Gastrocnemius medialis (tissue), 4 donors: ENCODE measurements at regions of chr17 and their contacts with region 1.

Region 1: GRCh38 chr17:3004133-3004801 is 59.1 kb downstream of the OR1D5 start:
- DNase-seq: peak; percentile 89 to 95
- ATAC-seq: peak; percentile 89 to 96
- H3K4me3 ChIP-seq: peak overlapping the region; percentile 32 to 52 (median 40)
- H3K27ac ChIP-seq: peak overlapping the region; percentile 71 to 79 (median 75)
- H3K4me1 ChIP-seq: peaks cover 18 to 20% of the 10 kb centered on the region in 2 donors
- H3K27me3 ChIP-seq: no peaks in the 10 kb centered on the region
- CTCF ChIP-seq: no peak
- POLR2A ChIP-seq: peak; percentile 32 to 40

Region 2: GRCh38 chr17:2982854-2983253 is 21.4 kb before region 1 on chr17:
- in situ Hi-C with region 1: no loop called
- intact Hi-C with region 1: loop called (anchors 1 kb)
- DNase-seq: peak; percentile 90 to 95
- ATAC-seq: peak; percentile 99
- H3K4me3 ChIP-seq: peak overlapping the region in 1 of 4 donors; percentile 32
- H3K27ac ChIP-seq: peak overlapping the region; percentile 45 to 73 (median 62)
- H3K4me1 ChIP-seq: peaks cover 14 to 15% of the 10 kb centered on the region in 2 donors
- H3K27me3 ChIP-seq: no peaks in the 10 kb centered on the region
- CTCF ChIP-seq: peak in 3 of 5 experiments; percentile 32 to 51 (median 44)
- POLR2A ChIP-seq: no peak

Region 3: GRCh38 chr17:3197219-3197618 is 193.0 kb after region 1 on chr17 and contains the start of gene OR1A2:
- in situ Hi-C with region 1: no loop called
- intact Hi-C with region 1: no loop called
- DNase-seq: no peak
- ATAC-seq: no peak
- H3K4me3 ChIP-seq: no peak within 1 kb of the TSS
- H3K27ac ChIP-seq: no peak within 1 kb of the TSS
- H3K4me1 ChIP-seq: no peaks in the 10 kb centered on the region
- H3K27me3 ChIP-seq: no peaks in the 10 kb centered on the region
- CTCF ChIP-seq: no peak
- POLR2A ChIP-seq: no peak
- total RNA-seq, gene OR1A2: not detected